ENCODE measurements at regions of chr19 and their contacts with region 1.

Region 1: GRCh38 chr19:10403137-10404021 is at the start of gene CDC37:
- DNase-seq: peak; percentile 99
- ATAC-seq: peak; percentile 79
- H3K4me3 Mint-ChIP-seq: peak within 1 kb of the TSS; percentile 94
- H3K27ac Mint-ChIP-seq: peak within 1 kb of the TSS; percentile 87
- H3K4me1 Mint-ChIP-seq: peaks cover 61% of the 10 kb centered on the region
- H3K27me3 Mint-ChIP-seq: no peaks in the 10 kb centered on the region
- total RNA-seq, gene CDC37: 178 to 190 TPM

Region 2: GRCh38 chr19:10259162-10259905 is 144.0 kb before region 1 on chr19:
- CTCF ChIA-PET with region 1: interaction called, 5 read pairs
- POLR2A ChIA-PET with region 1: interaction called, 4 read pairs
- intact Hi-C with region 1: loop called in 1 of 2 experiments (anchors 1 kb)
- DNase-seq: peak; percentile 99
- ATAC-seq: peak; percentile 73
- H3K4me3 Mint-ChIP-seq: peak overlapping the region; percentile 53
- H3K27ac Mint-ChIP-seq: peak overlapping the region; percentile 90
- H3K4me1 Mint-ChIP-seq: peaks cover 26% of the 10 kb centered on the region
- H3K27me3 Mint-ChIP-seq: no peaks in the 10 kb centered on the region

Region 3: GRCh38 chr19:10388957-10389356 is 14.4 kb before region 1 on chr19:
- CTCF ChIA-PET with region 1: interaction called, 18 read pairs
- POLR2A ChIA-PET with region 1: interaction called, 4 read pairs
- intact Hi-C with region 1: no loop called
- DNase-seq: peak; percentile 89
- ATAC-seq: peak; percentile 57
- H3K4me3 Mint-ChIP-seq: no peak overlapping the region
- H3K27ac Mint-ChIP-seq: no peak overlapping the region
- H3K4me1 Mint-ChIP-seq: no peaks in the 10 kb centered on the region
- H3K27me3 Mint-ChIP-seq: no peaks in the 10 kb centered on the region

Region 4: GRCh38 chr19:10431943-10432735 is 28.8 kb after region 1 on chr19:
- CTCF ChIA-PET with region 1: interaction called, 43 read pairs
- POLR2A ChIA-PET with region 1: interaction called, 3 read pairs
- intact Hi-C with region 1: loop called (anchors 1 to 2 kb)
- DNase-seq: peak; percentile 72
- ATAC-seq: peak; percentile 23
- H3K4me3 Mint-ChIP-seq: peak overlapping the region; percentile 53
- H3K27ac Mint-ChIP-seq: peak overlapping the region; percentile 55
- H3K4me1 Mint-ChIP-seq: peaks cover 38% of the 10 kb centered on the region
- H3K27me3 Mint-ChIP-seq: peaks cover 38% of the 10 kb centered on the region

Region 5: DNA sequence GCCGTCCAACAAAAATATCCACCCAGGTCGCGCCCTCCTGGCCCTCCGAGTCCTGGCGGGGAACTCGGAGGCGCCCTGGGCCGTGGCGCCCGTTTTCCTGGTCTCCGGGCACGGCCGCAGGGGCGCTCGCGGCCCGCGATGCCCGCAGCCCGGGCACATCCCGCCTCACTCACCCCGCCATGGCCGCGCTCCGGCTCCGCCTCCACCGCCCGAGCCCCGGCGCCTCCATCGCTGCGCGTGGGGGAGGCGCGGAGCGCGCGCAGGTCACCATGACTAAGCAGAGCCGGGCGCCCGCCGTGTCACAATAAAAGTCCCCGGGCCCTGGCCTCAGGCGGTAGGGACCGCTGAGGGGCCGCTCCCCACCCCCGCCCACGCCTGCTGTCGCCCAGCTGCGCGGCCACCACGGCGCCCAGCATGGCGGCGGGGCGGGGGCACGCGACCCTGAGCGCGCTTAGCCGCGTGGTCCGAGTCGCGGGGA is 99.2 kb after region 1 on chr19:
- CTCF ChIA-PET with region 1: interaction called, 5 read pairs
- POLR2A ChIA-PET with region 1: no interaction called
- intact Hi-C with region 1: loop called in 1 of 2 experiments (anchors 1 kb)
- DNase-seq: peak; percentile 95
- ATAC-seq: peak; percentile 91
- H3K4me3 Mint-ChIP-seq: peak overlapping the region; percentile 91
- H3K27ac Mint-ChIP-seq: peak overlapping the region; percentile 95
- H3K4me1 Mint-ChIP-seq: peaks cover 30% of the 10 kb centered on the region
- H3K27me3 Mint-ChIP-seq: no peaks in the 10 kb centered on the region

Region 6: GRCh38 chr19:10701955-10702525 is 298.7 kb after region 1 on chr19:
- CTCF ChIA-PET with region 1: interaction called, 4 read pairs
- POLR2A ChIA-PET with region 1: no interaction called
- intact Hi-C with region 1: loop called in 1 of 2 experiments (anchors 1 kb)
- DNase-seq: peak; percentile 60
- ATAC-seq: peak; percentile 43
- H3K4me3 Mint-ChIP-seq: peak overlapping the region; percentile 91
- H3K27ac Mint-ChIP-seq: peak overlapping the region; percentile 74
- H3K4me1 Mint-ChIP-seq: peaks cover 10% of the 10 kb centered on the region
- H3K27me3 Mint-ChIP-seq: no peaks in the 10 kb centered on the region

Measured in activated CD4-positive, alpha-beta T cell treated with anti-CD3 and anti-CD28 coated beads for 36 hours (primary cell).